Activated CD4-positive, alpha-beta T cell treated with anti-CD3 and anti-CD28 coated beads, Interleukin-2, amount 10 ng/mL, durations not matched to agents 24 days and 14 days (primary cell): ENCODE measurements at regions of chr5 and their contacts with region 1.

Region 1: GRCh38 chr5:40679155-40679913 is 381 bp upstream of the PTGER4 start:
- DNase-seq: peak; percentile 98
- H3K4me3 Mint-ChIP-seq: peak overlapping the region; percentile 99
- H3K27ac Mint-ChIP-seq: peak overlapping the region; percentile 99
- H3K4me1 Mint-ChIP-seq: peaks cover 48% of the 10 kb centered on the region
- H3K27me3 Mint-ChIP-seq: no peaks in the 10 kb centered on the region

Region 2: DNA sequence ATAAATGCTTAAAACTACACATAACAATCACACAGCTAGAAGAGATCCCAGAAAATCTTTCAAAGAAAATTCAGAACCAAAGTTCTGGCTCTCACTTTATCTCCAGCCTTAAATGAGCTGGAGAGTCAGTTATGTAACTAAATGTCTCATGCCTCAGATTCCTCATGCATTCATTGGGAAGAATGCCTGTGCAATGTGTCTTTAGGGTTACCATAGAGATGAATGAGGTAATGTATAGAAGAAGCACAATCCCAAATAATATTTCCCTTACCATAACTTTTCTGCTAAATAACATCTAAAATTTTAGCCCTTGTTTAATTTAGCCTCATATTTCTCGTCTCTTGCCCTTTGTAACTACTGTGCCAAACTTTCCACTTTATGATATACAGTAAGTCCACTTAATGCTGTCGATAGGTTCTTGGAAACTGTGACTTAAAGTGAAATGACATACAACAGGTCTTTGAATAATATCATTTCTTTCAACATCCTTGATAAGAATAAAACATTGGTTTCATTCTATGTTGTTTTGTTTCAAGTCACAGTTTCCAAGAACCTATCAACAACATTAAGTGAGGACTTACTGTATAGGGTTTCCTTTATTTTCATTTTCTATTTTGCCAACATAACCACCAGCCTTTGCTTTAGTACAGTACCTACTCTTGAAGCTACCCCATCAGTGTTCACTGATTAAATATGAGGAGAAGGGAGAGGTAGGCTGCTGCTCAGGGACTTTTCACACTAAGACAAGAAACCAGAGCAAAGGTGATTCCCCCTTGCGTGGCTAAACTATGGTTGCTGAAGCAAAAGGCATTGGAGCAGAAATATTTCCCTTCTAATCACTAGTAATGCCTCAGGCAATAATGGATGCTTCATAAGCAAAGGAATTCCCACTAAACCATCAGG is 295.3 kb before region 1 on chr5:
- intact Hi-C with region 1: loop called (anchors 1 kb)
- DNase-seq: peak; percentile 80
- H3K4me3 Mint-ChIP-seq: peak overlapping the region; percentile 63
- H3K27ac Mint-ChIP-seq: peak overlapping the region; percentile 86
- H3K4me1 Mint-ChIP-seq: peaks cover 70% of the 10 kb centered on the region
- H3K27me3 Mint-ChIP-seq: no peaks in the 10 kb centered on the region

Region 3: DNA sequence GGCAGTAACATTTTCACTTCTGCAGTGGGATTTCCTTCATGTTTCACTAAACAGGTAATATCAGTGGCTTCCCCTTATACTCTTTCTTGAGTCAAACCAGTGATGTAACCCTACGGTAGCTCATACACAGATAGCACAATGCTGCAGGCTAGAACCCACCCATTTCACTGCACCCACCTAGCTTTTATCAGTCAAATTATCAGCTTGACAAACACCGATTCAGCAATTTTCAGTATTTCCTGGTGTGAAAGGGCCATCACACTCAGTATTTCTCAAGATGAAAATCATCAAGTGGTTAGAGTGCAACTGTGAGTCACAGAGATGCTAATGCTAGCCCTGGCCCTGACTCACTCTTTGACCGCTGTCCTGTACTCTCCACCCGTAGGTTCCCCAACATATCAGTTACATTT is 241.9 kb before region 1 on chr5:
- intact Hi-C with region 1: loop called (anchors 1 kb)
- DNase-seq: peak; percentile 66
- H3K4me3 Mint-ChIP-seq: peak overlapping the region; percentile 16
- H3K27ac Mint-ChIP-seq: peak overlapping the region; percentile 79
- H3K4me1 Mint-ChIP-seq: peaks cover 69% of the 10 kb centered on the region
- H3K27me3 Mint-ChIP-seq: no peaks in the 10 kb centered on the region

Region 4: GRCh38 chr5:40578501-40579451 is 100.6 kb before region 1 on chr5:
- intact Hi-C with region 1: loop called (anchors 1 kb)
- DNase-seq: peak; percentile 76
- H3K4me3 Mint-ChIP-seq: peak overlapping the region; percentile 45
- H3K27ac Mint-ChIP-seq: peak overlapping the region; percentile 93
- H3K4me1 Mint-ChIP-seq: peaks cover 27% of the 10 kb centered on the region
- H3K27me3 Mint-ChIP-seq: no peaks in the 10 kb centered on the region

Region 5: GRCh38 chr5:40627706-40628105 is 51.6 kb before region 1 on chr5:
- intact Hi-C with region 1: loop called (anchors 10 kb)
- DNase-seq: no peak
- H3K4me3 Mint-ChIP-seq: no peak overlapping the region
- H3K27ac Mint-ChIP-seq: no peak overlapping the region
- H3K4me1 Mint-ChIP-seq: peaks cover 21% of the 10 kb centered on the region
- H3K27me3 Mint-ChIP-seq: no peaks in the 10 kb centered on the region

Region 6: GRCh38 chr5:40755407-40756365 is 76.4 kb after region 1 on chr5 and contains the start of gene TTC33:
- intact Hi-C with region 1: loop called (anchors 2 kb)
- DNase-seq: peak; percentile 98
- H3K4me3 Mint-ChIP-seq: no peak within 1 kb of the TSS
- H3K27ac Mint-ChIP-seq: no peak within 1 kb of the TSS
- H3K4me1 Mint-ChIP-seq: peaks cover 15% of the 10 kb centered on the region
- H3K27me3 Mint-ChIP-seq: no peaks in the 10 kb centered on the region
- total RNA-seq, gene TTC33: 22.7 and 23.1 TPM in 2 replicates